Activated CD8-positive, alpha-beta memory T cell treated with anti-CD3 and anti-CD28 coated beads, Interleukin-2, amount 10 ng/mL, durations not matched to agents 7 days and 5 days (primary cell): ENCODE measurements at regions of chr17 and their contacts with region 1.

Region 1: GRCh38 chr17:2401426-2402221 is 764 bp upstream of the MNT start:
- DNase-seq: peak; percentile 100
- ATAC-seq: peak; percentile 61
- H3K4me3 Mint-ChIP-seq: peak overlapping the region; percentile 94
- H3K27ac Mint-ChIP-seq: peak overlapping the region; percentile 93
- H3K4me1 Mint-ChIP-seq: peaks cover 49% of the 10 kb centered on the region
- H3K27me3 Mint-ChIP-seq: no peaks in the 10 kb centered on the region

Region 2: GRCh38 chr17:2380226-2380922 is 21.2 kb before region 1 on chr17:
- CTCF ChIA-PET with region 1: interaction called, 94 read pairs
- DNase-seq: no peak
- ATAC-seq: no peak
- H3K4me3 Mint-ChIP-seq: no peak overlapping the region
- H3K27ac Mint-ChIP-seq: no peak overlapping the region
- H3K4me1 Mint-ChIP-seq: peaks cover 4% of the 10 kb centered on the region
- H3K27me3 Mint-ChIP-seq: no peaks in the 10 kb centered on the region